GM10248 (cell line): ENCODE measurements at regions of chr4 and their contacts with region 1.

Region 1: DNA sequence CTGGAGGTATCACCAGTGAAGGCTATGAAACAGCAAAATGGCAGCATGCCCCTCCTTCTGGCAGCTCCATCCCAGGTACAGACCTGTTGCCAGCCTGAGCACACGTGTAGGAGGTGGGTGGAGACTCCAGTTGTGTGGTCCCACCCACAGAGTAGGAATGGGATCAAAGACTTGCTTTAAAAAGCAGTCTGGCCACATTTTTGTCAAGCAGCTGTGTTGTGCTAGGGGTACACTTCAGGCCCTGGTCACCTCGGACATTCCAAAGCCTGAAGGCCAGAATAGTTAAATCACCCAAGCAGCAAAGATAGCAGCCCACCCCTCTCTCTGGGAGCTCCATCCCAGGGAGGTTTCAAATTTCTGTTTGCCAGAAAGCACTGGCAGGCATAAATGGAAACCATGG is 20.3 kb upstream of the AMBN start:
- DNase-seq: no peak
- CTCF ChIP-seq: no peak

Region 2: GRCh38 chr4:70559211-70559830 is 12.5 kb before region 1 on chr4:
- CTCF ChIA-PET with region 1: interaction called, 21 read pairs
- POLR2A ChIA-PET with region 1: no interaction called
- DNase-seq: peak; percentile 67
- CTCF ChIP-seq: peak; percentile 87